Common myeloid progenitor, CD34-positive (primary cell): ENCODE measurements at regions of chr20 and their contacts with region 1.

Region 1: GRCh38 chr20:32456869-32457478 is 98.8 kb downstream of the ASXL1 start:
- DNase-seq: peak in 2 of 3 donors; percentile 55 to 59
- H3K4me3 ChIP-seq: peak overlapping the region in 2 of 7 experiments; percentile 30 to 40
- H3K27ac ChIP-seq: no peak overlapping the region
- H3K4me1 ChIP-seq: peaks cover 0 to 29% (median 28%) of the 10 kb centered on the region in 4 experiments
- H3K27me3 ChIP-seq: no peaks in the 10 kb centered on the region

Region 2: DNA sequence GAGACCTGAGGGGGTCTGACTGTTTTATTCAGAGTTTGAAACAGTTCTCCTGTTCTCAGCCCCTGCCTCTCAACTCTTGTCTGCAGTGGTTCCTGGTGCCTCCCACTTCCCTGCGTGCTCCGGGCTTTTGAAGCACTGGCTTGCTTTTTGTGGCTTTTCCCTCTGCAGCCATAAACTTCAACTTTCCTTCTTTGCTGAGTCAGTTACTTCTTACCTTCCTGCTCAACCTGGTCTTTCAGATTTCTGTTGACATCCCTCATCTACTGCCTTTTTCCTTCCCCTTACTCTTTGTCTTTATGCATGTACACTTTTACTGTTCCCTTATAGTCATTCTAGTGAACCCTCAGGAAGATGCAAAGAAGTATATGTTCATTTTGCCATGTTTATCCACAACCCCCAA is 41.5 kb before region 1 on chr20:
- CTCF ChIA-PET with region 1: no interaction called
- POLR2A ChIA-PET with region 1: no interaction called
- DNase-seq: peak in 2 of 3 donors; percentile 19 to 26
- H3K4me3 ChIP-seq: peak overlapping the region in 2 of 7 experiments; percentile 57 to 60
- H3K27ac ChIP-seq: no peak overlapping the region
- H3K4me1 ChIP-seq: peaks cover 7 to 27% (median 20%) of the 10 kb centered on the region in 4 experiments
- H3K27me3 ChIP-seq: no peaks in the 10 kb centered on the region

Region 3: GRCh38 chr20:32445539-32446273 is 11.3 kb before region 1 on chr20:
- CTCF ChIA-PET with region 1: interaction called, 23 read pairs
- POLR2A ChIA-PET with region 1: interaction called, 3 read pairs
- DNase-seq: peak; percentile 44 to 87 (median 86)
- H3K4me3 ChIP-seq: peak overlapping the region in 1 of 7 experiments; percentile 23
- H3K27ac ChIP-seq: peak overlapping the region; percentile 30 to 65
- H3K4me1 ChIP-seq: peaks cover 0 to 38% (median 25%) of the 10 kb centered on the region in 4 experiments
- H3K27me3 ChIP-seq: no peaks in the 10 kb centered on the region

Region 4: GRCh38 chr20:32470025-32470861 is 13.3 kb after region 1 on chr20:
- CTCF ChIA-PET with region 1: interaction called, 16 read pairs
- POLR2A ChIA-PET with region 1: interaction called, 3 read pairs
- DNase-seq: peak; percentile 52 to 83 (median 70)
- H3K4me3 ChIP-seq: peak overlapping the region in 3 of 7 experiments; percentile 4 to 32 (median 18)
- H3K27ac ChIP-seq: peak overlapping the region; percentile 40 to 74
- H3K4me1 ChIP-seq: peaks cover 0 to 78% (median 75%) of the 10 kb centered on the region in 4 experiments
- H3K27me3 ChIP-seq: no peaks in the 10 kb centered on the region